GM12878 (cell line): ENCODE measurements at regions of chr11 and their contacts with region 1.

Region 1: GRCh38 chr11:57785072-57785471 is 23.5 kb downstream of the CTNND1 start:
- DNase-seq: no peak
- ATAC-seq: peak; percentile 79
- H3K4me3 ChIP-seq: no peak overlapping the region
- H3K27ac ChIP-seq: peak overlapping the region; percentile 73
- H3K4me1 ChIP-seq: peaks cover 34% of the 10 kb centered on the region
- H3K27me3 ChIP-seq: no peaks in the 10 kb centered on the region
- CTCF ChIP-seq: no peak
- EP300 ChIP-seq: peak in 1 of 2 experiments; percentile 29; a peak in 1 of 4 replicates
- POLR2A ChIP-seq: no peak
- RAD21 ChIP-seq: no peak

Region 2: GRCh38 chr11:57772562-57772961 is 12.5 kb before region 1 on chr11:
- CTCF ChIA-PET with region 1: interaction called, 7 read pairs
- POLR2A ChIA-PET with region 1: interaction called, 110 read pairs
- RAD21 ChIA-PET with region 1: interaction called, 13 read pairs
- SMC1A ChIA-PET with region 1: interaction called, 197 read pairs
- in situ Hi-C with region 1: no loop called
- intact Hi-C with region 1: no loop called
- DNase-seq: no peak
- ATAC-seq: peak; percentile 9; the same call in 1 of the 3 replicates
- H3K4me3 ChIP-seq: no peak overlapping the region
- H3K27ac ChIP-seq: no peak overlapping the region
- H3K4me1 ChIP-seq: peaks cover 11% of the 10 kb centered on the region
- H3K27me3 ChIP-seq: no peaks in the 10 kb centered on the region
- CTCF ChIP-seq: no peak
- EP300 ChIP-seq: no peak
- POLR2A ChIP-seq: no peak
- RAD21 ChIP-seq: no peak